ENCODE measurements at regions of chr9 and their contacts with region 1.

Region 1: DNA sequence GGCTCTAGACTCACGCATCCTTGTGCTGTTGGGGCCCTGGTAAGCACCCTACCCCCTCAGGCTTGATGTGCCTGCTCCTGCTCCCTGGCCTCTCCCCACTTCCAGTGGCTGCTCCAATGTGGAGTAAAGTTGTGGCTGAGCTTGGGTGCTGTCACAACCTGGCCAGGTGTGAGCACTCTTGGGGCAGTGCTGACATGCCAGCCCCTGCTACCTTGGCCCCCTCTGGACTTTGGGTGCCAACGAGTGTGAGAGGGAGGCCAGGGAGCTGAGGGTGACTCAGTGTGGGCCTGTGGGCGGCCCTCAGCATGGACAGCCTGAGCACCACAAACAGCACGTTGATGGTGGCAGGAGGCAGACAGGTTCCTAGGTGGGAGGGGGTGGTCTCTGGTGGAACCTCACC is 870.2 kb upstream of the C9orf72 start:
- DNase-seq: no peak
- H3K4me3 ChIP-seq: no peak overlapping the region
- H3K27ac ChIP-seq: no peak overlapping the region
- H3K4me1 ChIP-seq: no peaks in the 10 kb centered on the region
- H3K27me3 ChIP-seq: no peaks in the 10 kb centered on the region
- CTCF ChIP-seq: no peak
- EP300 ChIP-seq: no peak
- POLR2A ChIP-seq: no peak

Region 2: DNA sequence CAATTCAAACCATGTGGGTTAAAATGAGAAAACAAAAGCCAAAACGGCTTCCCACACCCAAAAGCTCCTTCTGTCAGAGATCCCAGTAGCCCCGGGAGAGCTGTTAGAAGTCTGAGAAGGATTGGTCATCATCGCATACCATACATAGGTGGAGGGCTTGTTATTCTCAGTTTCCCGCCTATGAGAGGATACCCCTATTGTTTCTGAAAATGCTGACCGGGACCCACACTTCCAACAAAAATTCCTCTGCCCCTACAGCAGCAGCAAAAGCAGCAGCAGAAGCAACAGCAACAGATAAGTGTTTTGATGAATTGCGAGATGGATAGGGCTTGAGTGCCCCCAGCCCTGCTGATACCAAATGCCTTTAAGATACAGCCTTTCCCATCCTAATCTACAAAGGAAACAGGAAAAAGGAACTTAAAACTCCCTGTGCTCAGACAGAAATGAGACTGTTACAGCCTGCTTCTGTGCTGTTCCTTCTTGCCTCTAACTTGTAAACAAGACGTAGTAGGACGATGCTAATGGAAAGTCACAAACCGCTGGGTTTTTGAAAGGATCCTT is 1334.4 kb before region 1 on chr9 and contains the start of gene TEK:
- intact Hi-C with region 1: no loop called
- DNase-seq: peak in 1 of 2 donors; percentile 35
- H3K4me3 ChIP-seq: peak within 1 kb of the TSS in 3 of 4 donors; percentile 11 to 13 (median 13)
- H3K27ac ChIP-seq: peak within 1 kb of the TSS in 3 of 5 donors; percentile 4 to 35 (median 29)
- H3K4me1 ChIP-seq: peaks cover 0 to 6% (median 0%) of the 10 kb centered on the region in 4 donors
- H3K27me3 ChIP-seq: no peaks in the 10 kb centered on the region
- CTCF ChIP-seq: no peak
- EP300 ChIP-seq: no peak
- POLR2A ChIP-seq: no peak
- total RNA-seq, gene TEK: 2.0 to 25.5 (median 4.1) TPM in 4 of 5 donors, not detected in the other

Region 3: DNA sequence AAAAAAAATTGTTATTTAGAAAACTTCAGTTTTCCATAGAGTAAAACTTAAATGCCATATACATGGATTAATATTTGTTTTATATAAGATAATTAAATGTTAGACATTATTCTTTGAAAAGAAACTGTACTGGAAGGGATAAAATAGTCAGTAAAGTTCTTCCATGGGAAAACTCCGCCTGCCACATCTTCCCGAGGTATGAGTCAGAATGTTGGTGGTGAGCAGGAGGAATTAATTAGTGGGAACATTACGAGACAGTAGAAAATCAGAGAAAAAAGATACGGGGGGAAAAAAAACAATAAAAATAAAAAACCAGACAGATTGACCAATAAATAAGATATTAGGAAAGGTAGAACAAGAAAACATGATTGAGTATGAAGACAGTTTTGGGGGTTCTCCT is 60.1 kb after region 1 on chr9:
- intact Hi-C with region 1: loop called (anchors 10 kb)
- DNase-seq: no peak
- H3K4me3 ChIP-seq: no peak overlapping the region
- H3K27ac ChIP-seq: no peak overlapping the region
- H3K4me1 ChIP-seq: no peaks in the 10 kb centered on the region
- H3K27me3 ChIP-seq: no peaks in the 10 kb centered on the region
- CTCF ChIP-seq: no peak
- EP300 ChIP-seq: no peak
- POLR2A ChIP-seq: no peak